Aorta (tissue), 5 donors: ENCODE measurements at regions of chr19 and their contacts with region 1.

Region 1: GRCh38 chr19:41426952-41427646 is at the start of gene B3GNT8:
- DNase-seq: peak; percentile 92 to 94
- ATAC-seq: peak; percentile 94
- H3K4me3 ChIP-seq: peak within 1 kb of the TSS; percentile 33 to 53
- H3K27ac ChIP-seq: peak within 1 kb of the TSS in 1 of 2 donors; percentile 48
- H3K4me1 ChIP-seq: no peaks in the 10 kb centered on the region
- H3K27me3 ChIP-seq: no peaks in the 10 kb centered on the region
- total RNA-seq, gene B3GNT8: 3.2 to 3.9 TPM

Region 2: GRCh38 chr19:41321600-41322270 is 105.4 kb before region 1 on chr19:
- intact Hi-C with region 1: loop called in 1 of 2 experiments (anchors 2 kb)
- DNase-seq: no peak
- ATAC-seq: peak; percentile 19
- H3K4me3 ChIP-seq: no peak overlapping the region
- H3K27ac ChIP-seq: peak overlapping the region in 1 of 2 donors; percentile 11
- H3K4me1 ChIP-seq: no peaks in the 10 kb centered on the region
- H3K27me3 ChIP-seq: no peaks in the 10 kb centered on the region

Region 3: DNA sequence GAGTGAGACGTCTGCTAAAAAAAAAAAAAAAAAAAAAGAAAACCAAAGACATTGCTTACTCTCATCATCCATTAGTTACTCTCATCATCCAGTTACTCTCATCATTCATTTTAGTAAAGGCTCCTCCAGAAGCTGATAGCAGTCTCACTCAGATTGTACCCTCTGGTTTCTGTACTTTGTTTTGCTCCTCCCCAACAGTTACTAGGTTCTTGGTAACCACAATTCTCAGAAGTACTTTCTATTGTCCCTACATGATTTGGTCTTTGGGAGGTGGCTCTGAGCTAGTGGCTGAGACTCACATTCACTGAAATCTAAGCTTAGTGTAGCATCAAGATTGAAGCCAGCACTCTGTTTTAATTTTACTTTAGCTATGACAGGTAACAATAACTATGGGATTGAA is 30.1 kb after region 1 on chr19:
- intact Hi-C with region 1: no loop called
- DNase-seq: no peak
- ATAC-seq: no peak
- H3K4me3 ChIP-seq: no peak overlapping the region
- H3K27ac ChIP-seq: no peak overlapping the region
- H3K4me1 ChIP-seq: no peaks in the 10 kb centered on the region
- H3K27me3 ChIP-seq: no peaks in the 10 kb centered on the region